H1 (cell line): ENCODE measurements at regions of chr17 and their contacts with region 1.

Region 1: DNA sequence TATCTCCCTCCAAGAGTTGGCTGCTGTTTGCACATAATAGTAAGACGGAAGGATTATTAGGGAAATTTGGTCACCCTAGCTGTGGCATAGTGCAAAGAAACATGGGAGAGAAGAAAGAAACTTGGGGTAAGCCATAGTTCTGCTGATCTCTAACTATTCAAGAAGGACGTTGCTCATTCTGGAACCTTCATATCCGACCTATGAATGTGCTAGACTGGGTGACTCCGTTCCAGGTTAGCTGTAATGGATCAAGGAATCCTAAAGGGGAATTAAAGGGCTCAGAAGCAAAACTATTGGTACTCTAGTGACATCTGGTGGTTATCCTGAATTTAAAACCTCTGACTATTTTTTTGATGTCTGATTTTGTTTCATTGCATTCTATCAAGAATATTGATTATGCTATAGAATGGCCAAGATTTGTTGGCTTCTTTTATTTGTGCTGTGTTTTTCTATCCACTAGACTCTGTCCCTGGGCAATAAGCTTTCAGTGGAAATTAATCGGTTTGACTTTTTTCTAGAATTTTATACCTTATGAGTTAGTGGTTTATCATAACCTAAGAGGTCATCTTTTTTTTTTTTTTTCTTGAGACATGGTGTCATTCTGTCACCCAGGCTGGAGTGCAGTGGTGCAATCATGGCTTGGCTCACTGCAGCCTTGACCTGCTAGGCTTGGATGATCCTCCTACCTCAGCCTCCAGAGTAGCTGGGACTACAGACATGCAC is 19.5 kb downstream of the PCTP start:
- DNase-seq: no peak
- H3K4me3 ChIP-seq: no peak overlapping the region
- H3K27ac ChIP-seq: no peak overlapping the region
- H3K4me1 ChIP-seq: no peaks in the 10 kb centered on the region
- H3K27me3 ChIP-seq: no peaks in the 10 kb centered on the region
- CTCF ChIP-seq: peak in 2 of 3 experiments; percentile 11 to 69; a peak in 2 of 4 replicates
- EP300 ChIP-seq: no peak
- POLR2A ChIP-seq: no peak
- RAD21 ChIP-seq: peak; percentile 78

Region 2: DNA sequence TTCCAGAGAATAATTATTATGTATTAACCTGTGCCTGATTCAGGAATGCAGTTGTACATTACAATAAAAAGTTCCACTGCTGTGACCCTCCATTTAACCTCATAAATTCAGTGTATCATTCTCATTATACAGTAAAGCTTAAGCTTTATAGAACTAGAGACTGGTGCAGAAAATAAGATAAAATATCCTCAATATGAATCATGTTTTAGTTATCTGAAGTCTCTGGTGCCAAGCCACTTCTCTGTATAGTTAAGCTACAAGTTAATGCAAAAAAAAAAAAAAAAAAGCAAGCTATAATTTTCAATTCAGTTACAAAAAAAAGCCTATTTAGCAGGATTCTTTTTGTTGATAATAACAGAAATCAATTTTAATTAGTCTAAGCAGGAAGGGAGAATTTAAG is 236.7 kb before region 1 on chr17:
- CTCF ChIA-PET with region 1: interaction called, 169 read pairs
- POLR2A ChIA-PET with region 1: no interaction called
- DNase-seq: no peak
- H3K4me3 ChIP-seq: no peak overlapping the region
- H3K27ac ChIP-seq: no peak overlapping the region
- H3K4me1 ChIP-seq: no peaks in the 10 kb centered on the region
- H3K27me3 ChIP-seq: no peaks in the 10 kb centered on the region
- CTCF ChIP-seq: no peak
- EP300 ChIP-seq: no peak
- POLR2A ChIP-seq: no peak
- RAD21 ChIP-seq: no peak

Region 3: DNA sequence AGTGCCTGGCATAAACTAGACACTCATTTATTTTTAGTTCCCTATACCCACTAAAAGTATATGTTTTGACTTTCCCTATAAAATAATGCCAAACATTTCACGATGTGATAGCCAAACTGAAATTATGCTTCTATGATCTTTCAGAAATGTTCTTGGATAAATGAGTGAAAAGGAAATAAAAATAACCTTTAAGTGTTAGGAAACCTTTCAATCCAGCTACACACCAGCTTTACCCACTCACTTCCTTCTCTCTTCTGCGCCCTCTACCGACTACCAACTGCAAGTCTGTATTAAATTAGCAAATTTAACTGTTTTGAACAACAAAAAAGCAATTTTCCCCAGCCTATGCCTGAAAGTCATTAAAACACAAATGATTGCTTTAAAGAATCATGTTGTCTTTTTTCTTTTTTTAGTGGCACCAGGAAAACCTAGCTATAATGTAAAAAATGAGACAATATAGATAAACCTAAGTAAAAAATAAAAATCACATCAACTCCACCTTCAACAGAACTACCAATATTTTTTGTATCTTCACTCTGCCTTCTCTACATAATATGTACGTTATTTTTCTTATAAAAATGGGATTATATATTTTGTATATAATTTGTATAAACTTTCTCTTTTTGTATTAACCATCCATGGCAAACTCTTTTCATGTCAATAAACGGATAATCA is 34.4 kb before region 1 on chr17:
- CTCF ChIA-PET with region 1: interaction called, 42 read pairs
- POLR2A ChIA-PET with region 1: no interaction called
- DNase-seq: no peak
- H3K4me3 ChIP-seq: no peak overlapping the region
- H3K27ac ChIP-seq: no peak overlapping the region
- H3K4me1 ChIP-seq: peaks cover 1 to 16% (median 15%) of the 10 kb centered on the region in 4 experiments; a peak in 4 of 7 replicates
- H3K27me3 ChIP-seq: no peaks in the 10 kb centered on the region
- CTCF ChIP-seq: peak in 2 of 3 experiments; percentile 64 to 72; a peak in 3 of 4 replicates
- EP300 ChIP-seq: no peak
- POLR2A ChIP-seq: no peak
- RAD21 ChIP-seq: peak; percentile 46 to 57

Region 4: GRCh38 chr17:55814377-55814776 is 44.1 kb after region 1 on chr17:
- CTCF ChIA-PET with region 1: interaction called, 13 read pairs
- POLR2A ChIA-PET with region 1: no interaction called
- DNase-seq: no peak
- H3K4me3 ChIP-seq: no peak overlapping the region
- H3K27ac ChIP-seq: no peak overlapping the region
- H3K4me1 ChIP-seq: no peaks in the 10 kb centered on the region
- H3K27me3 ChIP-seq: no peaks in the 10 kb centered on the region
- CTCF ChIP-seq: no peak
- EP300 ChIP-seq: no peak
- POLR2A ChIP-seq: no peak
- RAD21 ChIP-seq: no peak

Region 5: DNA sequence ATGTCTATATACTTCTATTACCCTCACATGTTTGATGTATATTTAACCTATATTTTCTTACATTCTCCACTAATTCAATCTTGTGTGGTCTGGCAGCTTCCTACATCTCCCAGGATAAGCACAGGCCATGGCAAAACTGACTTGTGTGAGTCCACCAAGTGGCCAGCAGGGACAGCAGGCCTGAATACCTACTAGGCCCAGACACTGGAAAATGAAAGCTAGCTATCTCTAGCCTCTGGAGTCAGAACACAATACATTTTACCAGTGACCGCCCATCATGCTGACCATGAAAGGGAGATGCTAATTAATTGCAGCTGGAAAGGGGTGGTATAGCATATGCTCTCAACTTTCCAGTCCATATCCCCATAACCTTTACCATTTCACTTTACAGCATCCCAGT is 112.8 kb after region 1 on chr17:
- CTCF ChIA-PET with region 1: no interaction called
- POLR2A ChIA-PET with region 1: no interaction called
- DNase-seq: no peak
- H3K4me3 ChIP-seq: no peak overlapping the region
- H3K27ac ChIP-seq: no peak overlapping the region
- H3K4me1 ChIP-seq: no peaks in the 10 kb centered on the region
- H3K27me3 ChIP-seq: no peaks in the 10 kb centered on the region
- CTCF ChIP-seq: peak; percentile 8 to 52 (median 40); a peak in 2 of 4 replicates
- EP300 ChIP-seq: no peak
- POLR2A ChIP-seq: no peak
- RAD21 ChIP-seq: peak in 1 of 2 experiments; percentile 9; a peak in 2 of 4 replicates